GM12878 (cell line): ENCODE measurements at regions of chr10 and their contacts with region 1.

Region 1: GRCh38 chr10:81018708-81019365 is 481.1 kb downstream of the SH2D4B start:
- DNase-seq: no peak
- ATAC-seq: peak; percentile 88
- H3K4me3 ChIP-seq: no peak overlapping the region
- H3K27ac ChIP-seq: no peak overlapping the region
- H3K4me1 ChIP-seq: no peaks in the 10 kb centered on the region; the same call in 1 of the 2 replicates
- H3K27me3 ChIP-seq: no peaks in the 10 kb centered on the region
- CTCF ChIP-seq: peak; percentile 72 to 80 (median 73)
- EP300 ChIP-seq: no peak
- POLR2A ChIP-seq: no peak
- RAD21 ChIP-seq: peak; percentile 78

Region 2: GRCh38 chr10:80699602-80700039 is 319.2 kb before region 1 on chr10:
- CTCF ChIA-PET with region 1: interaction called, 37 read pairs
- POLR2A ChIA-PET with region 1: no interaction called
- RAD21 ChIA-PET with region 1: interaction called, 19 read pairs
- SMC1A ChIA-PET with region 1: interaction called, 12 read pairs
- in situ Hi-C with region 1: loop called (anchors 5 kb)
- intact Hi-C with region 1: loop called (anchors 1 kb)
- DNase-seq: no peak
- ATAC-seq: peak; percentile 96
- H3K4me3 ChIP-seq: no peak overlapping the region
- H3K27ac ChIP-seq: no peak overlapping the region
- H3K4me1 ChIP-seq: no peaks in the 10 kb centered on the region; the same call in 1 of the 2 replicates
- H3K27me3 ChIP-seq: no peaks in the 10 kb centered on the region
- CTCF ChIP-seq: peak; percentile 88 to 92 (median 90)
- EP300 ChIP-seq: no peak
- POLR2A ChIP-seq: no peak
- RAD21 ChIP-seq: peak; percentile 88

Region 3: DNA sequence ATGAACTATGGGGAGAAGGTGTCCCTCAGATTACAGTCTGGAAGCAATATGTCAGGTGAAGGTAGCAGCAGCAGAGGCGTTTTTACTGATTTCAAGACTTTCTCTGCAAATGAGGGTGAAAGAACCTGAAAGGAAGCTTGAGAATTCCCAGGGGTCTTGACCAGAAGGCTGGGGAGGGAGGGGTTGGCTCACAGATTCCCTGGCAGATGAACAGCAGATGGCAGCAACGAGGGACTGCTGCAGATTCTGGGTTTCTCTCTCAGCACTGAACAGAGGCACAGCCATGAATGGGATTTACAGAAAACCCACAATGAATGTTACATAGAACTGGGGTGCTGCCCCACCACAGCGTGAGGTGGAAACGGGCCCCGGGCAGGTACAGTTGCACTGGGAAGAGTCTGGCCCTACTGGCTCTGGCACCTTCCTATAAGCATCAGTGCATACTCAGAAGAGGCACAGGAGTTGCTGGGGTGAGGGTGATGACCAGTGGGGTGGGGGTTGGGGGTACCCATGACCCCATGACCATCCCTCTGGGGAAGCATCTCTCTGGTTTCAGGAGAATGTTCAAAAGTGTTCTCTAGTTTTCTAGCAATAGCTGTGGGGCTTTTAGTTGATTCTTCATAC is 163.4 kb before region 1 on chr10:
- CTCF ChIA-PET with region 1: interaction called, 30 read pairs
- POLR2A ChIA-PET with region 1: no interaction called
- RAD21 ChIA-PET with region 1: interaction called, 14 read pairs
- SMC1A ChIA-PET with region 1: interaction called, 21 read pairs
- in situ Hi-C with region 1: no loop called
- intact Hi-C with region 1: loop called (anchors 2 kb)
- DNase-seq: peak; percentile 13
- ATAC-seq: peak; percentile 92
- H3K4me3 ChIP-seq: no peak overlapping the region
- H3K27ac ChIP-seq: no peak overlapping the region
- H3K4me1 ChIP-seq: no peaks in the 10 kb centered on the region
- H3K27me3 ChIP-seq: peaks cover 0 to 2% of the 10 kb centered on the region in 2 experiments; a peak in 1 of 4 replicates
- CTCF ChIP-seq: peak; percentile 48 to 72 (median 67); a peak in 5 of 6 replicates
- EP300 ChIP-seq: no peak
- POLR2A ChIP-seq: no peak
- RAD21 ChIP-seq: peak; percentile 49

Region 4: GRCh38 chr10:80945264-80945880 is 73.5 kb before region 1 on chr10:
- CTCF ChIA-PET with region 1: interaction called, 5 read pairs
- POLR2A ChIA-PET with region 1: no interaction called
- RAD21 ChIA-PET with region 1: interaction called, 13 read pairs
- SMC1A ChIA-PET with region 1: interaction called, 4 read pairs
- in situ Hi-C with region 1: no loop called
- intact Hi-C with region 1: no loop called
- DNase-seq: no peak
- ATAC-seq: peak; percentile 91
- H3K4me3 ChIP-seq: no peak overlapping the region
- H3K27ac ChIP-seq: no peak overlapping the region
- H3K4me1 ChIP-seq: no peaks in the 10 kb centered on the region
- H3K27me3 ChIP-seq: no peaks in the 10 kb centered on the region
- CTCF ChIP-seq: peak; percentile 54 to 86 (median 85)
- EP300 ChIP-seq: no peak
- POLR2A ChIP-seq: no peak
- RAD21 ChIP-seq: peak; percentile 79

Region 5: GRCh38 chr10:81008726-81009125 is 10.1 kb before region 1 on chr10:
- CTCF ChIA-PET with region 1: interaction called, 26 read pairs
- POLR2A ChIA-PET with region 1: interaction called, 3 read pairs
- RAD21 ChIA-PET with region 1: interaction called, 3 read pairs
- SMC1A ChIA-PET with region 1: interaction called, 4 read pairs
- in situ Hi-C with region 1: no loop called
- intact Hi-C with region 1: no loop called
- DNase-seq: no peak
- ATAC-seq: no peak
- H3K4me3 ChIP-seq: no peak overlapping the region
- H3K27ac ChIP-seq: no peak overlapping the region
- H3K4me1 ChIP-seq: no peaks in the 10 kb centered on the region
- H3K27me3 ChIP-seq: no peaks in the 10 kb centered on the region
- CTCF ChIP-seq: no peak
- EP300 ChIP-seq: no peak
- POLR2A ChIP-seq: no peak
- RAD21 ChIP-seq: no peak